ENCODE measurements at regions of chr6 and their contacts with region 1.

Region 1: DNA sequence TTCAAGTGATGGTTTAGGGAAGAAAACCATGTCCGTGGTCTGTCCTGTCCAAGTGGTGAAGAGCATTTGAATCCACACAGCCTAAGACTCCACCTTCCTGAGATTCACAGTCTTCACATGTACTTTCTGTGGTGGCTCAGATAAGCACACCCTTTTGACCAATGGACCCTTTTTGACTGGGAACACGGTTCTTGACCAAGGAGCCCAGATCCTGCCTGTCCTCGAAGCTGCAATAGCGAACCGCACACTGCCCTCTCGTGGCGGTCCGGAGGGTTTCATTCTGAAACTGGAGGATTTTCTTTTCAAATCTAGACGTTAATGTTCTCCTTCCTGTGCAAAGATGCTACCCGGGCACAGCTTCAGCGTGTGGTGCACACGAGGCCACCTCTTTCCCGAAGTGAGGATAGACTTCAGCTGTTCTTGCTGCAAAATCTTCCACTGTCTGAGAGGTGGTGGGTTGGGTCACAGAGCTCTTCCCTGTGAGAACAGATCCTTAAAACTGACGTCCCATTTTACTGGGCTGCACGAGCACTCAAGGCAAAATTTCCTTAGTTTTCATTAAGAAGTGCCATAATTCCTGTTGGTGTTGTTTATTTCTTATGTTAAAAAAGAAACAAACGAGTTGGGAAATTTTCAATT is 90.5 kb downstream of the SYNJ2 start:
- DNase-seq: peak; percentile 58 to 72
- ATAC-seq: peak; percentile 63 to 79
- H3K4me3 ChIP-seq: no peak overlapping the region
- H3K27ac ChIP-seq: peak overlapping the region; percentile 67 to 81
- H3K4me1 ChIP-seq: peaks cover 39% of the 10 kb centered on the region
- CTCF ChIP-seq: peak; percentile 77
- EP300 ChIP-seq: no peak
- POLR2A ChIP-seq: no peak
- RAD21 ChIP-seq: peak; percentile 91 to 93

Region 2: DNA sequence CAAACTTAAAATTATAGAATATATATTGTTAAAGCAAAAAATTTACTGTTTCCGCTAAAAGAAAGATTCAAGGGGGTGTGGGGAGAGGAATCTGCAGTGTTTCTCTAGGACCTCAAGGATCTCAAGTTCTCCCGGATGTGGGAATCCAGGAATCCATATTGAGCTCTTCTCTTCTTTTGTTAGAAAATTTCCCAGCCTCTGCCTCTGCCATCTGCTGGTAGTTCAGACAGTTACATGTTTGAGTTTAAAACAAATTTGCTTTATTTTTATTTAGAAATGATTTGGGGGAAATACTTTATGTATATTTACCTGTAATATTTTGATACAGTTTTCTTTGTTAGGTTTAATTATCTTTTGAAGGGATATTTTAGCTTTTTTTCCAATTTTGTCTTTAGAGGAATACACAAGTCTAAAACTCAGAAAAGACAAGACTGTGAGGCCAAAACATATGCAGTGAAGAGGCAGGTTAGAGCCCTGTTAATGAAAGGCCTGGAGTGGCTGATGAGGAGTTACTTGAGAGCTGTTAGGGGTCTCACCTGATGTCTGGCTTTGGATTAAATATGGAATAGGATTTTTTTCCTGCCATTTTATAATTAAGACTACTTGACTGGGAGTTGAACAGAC is 1026.3 kb before region 1 on chr6:
- CTCF ChIA-PET with region 1: no interaction called
- POLR2A ChIA-PET with region 1: no interaction called
- DNase-seq: peak; percentile 31 to 57
- ATAC-seq: peak; percentile 68 to 83; a peak in 5 of 6 replicates
- H3K4me3 ChIP-seq: no peak overlapping the region
- H3K27ac ChIP-seq: no peak overlapping the region
- H3K4me1 ChIP-seq: no peaks in the 10 kb centered on the region
- CTCF ChIP-seq: peak; percentile 50
- EP300 ChIP-seq: no peak
- POLR2A ChIP-seq: no peak
- RAD21 ChIP-seq: peak; percentile 29 to 35; a peak in 3 of 5 replicates

Region 3: GRCh38 chr6:157644043-157644810 is 428.0 kb before region 1 on chr6:
- CTCF ChIA-PET with region 1: no interaction called
- POLR2A ChIA-PET with region 1: no interaction called
- DNase-seq: peak; percentile 5 to 25
- ATAC-seq: peak; percentile 73 to 80; a peak in 5 of 6 replicates
- H3K4me3 ChIP-seq: no peak overlapping the region
- H3K27ac ChIP-seq: no peak overlapping the region
- H3K4me1 ChIP-seq: 0 out of 3 replicates have a peak, but pooled peaks cover 4% of the 10 kb centered on the region
- CTCF ChIP-seq: peak; percentile 18; the same call in 1 of the 3 replicates
- EP300 ChIP-seq: no peak
- POLR2A ChIP-seq: no peak
- RAD21 ChIP-seq: peak; percentile 51 to 56

Region 4: GRCh38 chr6:157937916-157938315 is 134.3 kb before region 1 on chr6:
- CTCF ChIA-PET with region 1: interaction called, 11 read pairs
- POLR2A ChIA-PET with region 1: no interaction called
- DNase-seq: no peak
- ATAC-seq: no peak
- H3K4me3 ChIP-seq: no peak overlapping the region
- H3K27ac ChIP-seq: no peak overlapping the region
- H3K4me1 ChIP-seq: no peaks in the 10 kb centered on the region
- CTCF ChIP-seq: no peak
- EP300 ChIP-seq: no peak
- POLR2A ChIP-seq: no peak
- RAD21 ChIP-seq: no peak

Region 5: GRCh38 chr6:157981395-157982296 is 90.6 kb before region 1 on chr6 and contains the start of gene SYNJ2:
- CTCF ChIA-PET with region 1: interaction called, 23 read pairs
- POLR2A ChIA-PET with region 1: no interaction called
- DNase-seq: peak; percentile 67 to 71
- ATAC-seq: peak; percentile 77 to 78
- H3K4me3 ChIP-seq: peak within 1 kb of the TSS; percentile 89
- H3K27ac ChIP-seq: peak within 1 kb of the TSS; percentile 89 to 97
- H3K4me1 ChIP-seq: peaks cover 40% of the 10 kb centered on the region
- CTCF ChIP-seq: peak; percentile 61
- EP300 ChIP-seq: no peak
- POLR2A ChIP-seq: no peak; the same call in 1 of the 2 replicates
- RAD21 ChIP-seq: peak; percentile 12 to 61; a peak in 3 of 5 replicates
- polyA plus RNA-seq, gene SYNJ2: 22.3 and 24.7 TPM in 2 replicates

Region 6: DNA sequence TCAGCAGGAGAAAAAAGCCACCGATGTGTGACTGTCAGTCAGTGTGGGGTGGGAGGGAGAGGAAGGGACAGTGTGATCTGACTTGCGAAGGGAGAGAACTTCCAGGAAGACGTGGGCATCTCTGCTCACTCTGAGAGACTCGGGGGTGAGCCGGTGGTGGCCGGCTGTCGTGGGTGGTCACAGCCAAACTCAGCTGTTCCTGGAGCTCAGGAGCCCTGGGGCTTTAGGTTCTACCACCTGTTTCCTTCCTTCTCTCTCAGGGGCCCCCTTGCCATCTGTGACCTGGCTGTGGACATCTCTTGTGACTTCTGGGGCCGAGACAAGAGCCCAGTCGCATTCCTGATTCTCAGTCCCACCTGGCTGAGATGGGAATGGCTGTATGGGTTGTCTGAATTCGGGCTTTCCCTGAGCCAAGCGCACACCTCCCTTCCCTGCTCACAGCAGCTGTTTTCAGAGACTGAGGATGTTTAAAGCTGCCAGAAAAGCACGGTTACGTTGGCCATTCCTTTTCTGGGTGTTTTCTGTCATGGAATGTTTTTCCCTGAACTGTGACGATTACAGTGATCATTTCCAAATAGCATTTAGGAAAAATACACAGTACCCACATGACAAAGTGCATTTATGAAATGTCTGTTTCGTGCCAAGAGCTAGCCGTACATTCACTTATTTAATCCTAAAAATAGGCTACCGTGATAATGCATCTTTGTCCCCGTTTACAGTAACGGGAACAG is 54.0 kb before region 1 on chr6:
- CTCF ChIA-PET with region 1: interaction called, 12 read pairs
- POLR2A ChIA-PET with region 1: no interaction called
- DNase-seq: no peak
- ATAC-seq: no peak
- H3K4me3 ChIP-seq: no peak overlapping the region
- H3K27ac ChIP-seq: no peak overlapping the region
- H3K4me1 ChIP-seq: peaks cover 28% of the 10 kb centered on the region
- CTCF ChIP-seq: no peak
- EP300 ChIP-seq: no peak
- POLR2A ChIP-seq: no peak
- RAD21 ChIP-seq: no peak

Region 7: GRCh38 chr6:158040051-158040803 is 32.0 kb before region 1 on chr6:
- CTCF ChIA-PET with region 1: interaction called, 25 read pairs
- POLR2A ChIA-PET with region 1: no interaction called
- DNase-seq: peak; percentile 88 to 95
- ATAC-seq: peak; percentile 76 to 84
- H3K4me3 ChIP-seq: peak overlapping the region; percentile 20; the same call in 1 of the 3 replicates
- H3K27ac ChIP-seq: peak overlapping the region; percentile 94 to 100
- H3K4me1 ChIP-seq: peaks cover 70% of the 10 kb centered on the region
- CTCF ChIP-seq: no peak
- EP300 ChIP-seq: peak; percentile 88 to 90; a peak in 4 of 5 replicates
- POLR2A ChIP-seq: no peak
- RAD21 ChIP-seq: peak in 1 of 2 experiments; percentile 31; a peak in 2 of 5 replicates

Region 8: GRCh38 chr6:158060455-158061360 is 11.5 kb before region 1 on chr6:
- CTCF ChIA-PET with region 1: interaction called, 57 read pairs
- POLR2A ChIA-PET with region 1: interaction called, 4 read pairs
- DNase-seq: peak; percentile 46 to 87
- ATAC-seq: peak; percentile 74 to 80
- H3K4me3 ChIP-seq: no peak overlapping the region
- H3K27ac ChIP-seq: peak overlapping the region; percentile 94 to 98
- H3K4me1 ChIP-seq: peaks cover 60% of the 10 kb centered on the region
- CTCF ChIP-seq: no peak
- EP300 ChIP-seq: peak; percentile 58 to 75; a peak in 3 of 5 replicates
- POLR2A ChIP-seq: no peak
- RAD21 ChIP-seq: 0 out of 5 replicates have a peak, but pooled peaks of 1 of the 2 experiments have one; percentile 23

Measured in A549 (cell line).